ENCODE measurements at regions of chr7 and their contacts with region 1.

Region 1: DNA sequence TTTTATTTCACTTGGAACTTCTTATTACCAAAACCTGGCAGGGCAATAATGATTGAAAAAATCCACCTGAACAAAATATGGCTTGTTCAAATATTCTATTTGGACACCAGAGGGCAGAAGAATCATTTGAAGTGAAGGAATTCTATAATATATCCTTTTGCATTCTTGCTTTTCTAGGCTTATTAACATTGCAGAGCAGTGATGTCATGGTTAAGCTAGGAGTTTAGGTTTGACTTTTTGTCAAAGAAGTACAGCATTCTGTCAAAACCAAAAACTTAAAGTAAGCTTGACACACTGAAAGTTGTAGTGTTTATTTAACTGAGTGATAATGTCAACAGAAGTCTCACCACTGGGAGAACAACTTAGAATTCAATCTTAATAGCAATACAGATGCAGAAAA is 156.0 kb downstream of the SEMA3D start:
- DNase-seq: peak; percentile 74
- ATAC-seq: peak; percentile 92
- H3K4me3 ChIP-seq: no peak overlapping the region
- H3K27ac ChIP-seq: no peak overlapping the region
- H3K4me1 ChIP-seq: peaks cover 3% of the 10 kb centered on the region
- H3K27me3 ChIP-seq: no peaks in the 10 kb centered on the region
- CTCF ChIP-seq: peak; percentile 71

Region 2: GRCh38 chr7:85004402-85004801 is 26.5 kb before region 1 on chr7:
- CTCF ChIA-PET with region 1: no interaction called
- POLR2A ChIA-PET with region 1: no interaction called
- intact Hi-C with region 1: no loop called
- DNase-seq: no peak
- ATAC-seq: no peak; the same call in 1 of the 2 replicates
- H3K4me3 ChIP-seq: no peak overlapping the region
- H3K27ac ChIP-seq: no peak overlapping the region
- H3K4me1 ChIP-seq: peaks cover 13% of the 10 kb centered on the region; the same call in 1 of the 2 replicates
- H3K27me3 ChIP-seq: no peaks in the 10 kb centered on the region
- CTCF ChIP-seq: no peak

Region 3: DNA sequence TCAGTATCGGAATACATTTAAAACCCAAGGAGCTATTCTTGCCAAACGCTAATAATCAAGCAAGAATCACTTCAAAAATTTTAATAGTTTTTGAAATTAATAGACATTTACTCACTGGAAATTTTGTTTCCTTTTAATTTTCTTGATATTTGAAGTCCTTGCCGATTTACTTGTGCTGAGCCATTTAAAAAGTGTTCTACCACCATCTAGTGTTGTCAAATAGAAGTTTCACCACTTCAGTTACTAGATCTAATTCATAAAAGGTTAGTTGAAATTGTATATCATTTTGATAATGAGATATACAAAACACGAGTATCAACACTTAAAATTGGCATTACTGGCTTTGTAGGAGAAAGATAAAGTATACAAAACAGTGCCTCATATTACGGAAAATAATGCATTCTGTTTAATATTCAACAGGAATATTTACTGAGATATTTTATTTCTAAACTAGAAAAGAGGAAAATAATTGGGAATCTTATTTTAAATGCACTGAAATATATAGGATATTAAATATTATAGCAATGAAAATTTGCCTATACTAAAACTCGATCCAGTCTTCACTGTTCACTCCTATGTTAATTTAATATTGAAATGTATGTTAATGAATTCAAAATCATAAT is 820.8 kb after region 1 on chr7:
- CTCF ChIA-PET with region 1: no interaction called
- POLR2A ChIA-PET with region 1: no interaction called
- intact Hi-C with region 1: loop called (anchors 1 kb)
- DNase-seq: peak; percentile 51
- ATAC-seq: peak; percentile 50; the same call in 1 of the 2 replicates
- H3K4me3 ChIP-seq: no peak overlapping the region
- H3K27ac ChIP-seq: no peak overlapping the region
- H3K4me1 ChIP-seq: no peaks in the 10 kb centered on the region
- H3K27me3 ChIP-seq: 0 out of 2 replicates have a peak, but pooled peaks cover 2% of the 10 kb centered on the region
- CTCF ChIP-seq: peak; percentile 66

Measured in PC-3 (cell line).